Caco-2 (cell line): ENCODE measurements at regions of chr13 and their contacts with region 1.

Region 1: GRCh38 chr13:70960841-70961443 is 852.7 kb upstream of the KLHL1 start:
- DNase-seq: peak in 1 of 2 experiments; percentile 54
- H3K4me3 ChIP-seq: no peak overlapping the region
- H3K4me3 Mint-ChIP-seq: no peak overlapping the region
- H3K27ac Mint-ChIP-seq: no peak overlapping the region
- H3K4me1 ChIP-seq: no peaks in the 10 kb centered on the region
- H3K4me1 Mint-ChIP-seq: no peaks in the 10 kb centered on the region
- H3K27me3 ChIP-seq: no peaks in the 10 kb centered on the region
- H3K27me3 Mint-ChIP-seq: peaks cover under 1% of the 10 kb centered on the region
- CTCF ChIP-seq: peak; percentile 56 to 82

Region 2: DNA sequence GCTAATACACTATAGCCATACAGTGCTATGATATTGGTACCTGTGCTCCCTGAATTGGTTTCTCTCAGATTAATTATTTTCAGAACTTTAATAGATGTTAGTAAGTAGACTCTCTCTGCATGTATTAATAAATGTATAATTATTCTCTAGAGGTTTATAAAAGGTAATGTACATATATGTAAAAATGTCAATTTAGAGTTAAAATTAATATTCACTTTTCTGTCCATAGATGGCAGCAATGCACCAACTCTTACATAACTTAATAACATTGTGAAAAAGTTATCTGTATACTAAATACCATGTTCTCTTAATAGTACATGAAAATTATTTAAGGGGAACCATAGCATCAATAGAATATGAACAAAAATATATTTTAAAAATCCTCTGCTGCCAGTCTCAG is 337.7 kb before region 1 on chr13:
- CTCF ChIA-PET with region 1: no interaction called
- POLR2A ChIA-PET with region 1: no interaction called
- intact Hi-C with region 1: loop called (anchors 5 kb)
- DNase-seq: no peak
- H3K4me3 ChIP-seq: no peak overlapping the region
- H3K4me3 Mint-ChIP-seq: no peak overlapping the region
- H3K27ac Mint-ChIP-seq: no peak overlapping the region
- H3K4me1 ChIP-seq: no peaks in the 10 kb centered on the region
- H3K4me1 Mint-ChIP-seq: no peaks in the 10 kb centered on the region
- H3K27me3 ChIP-seq: no peaks in the 10 kb centered on the region
- H3K27me3 Mint-ChIP-seq: no peaks in the 10 kb centered on the region
- CTCF ChIP-seq: peak; percentile 28 to 32

Region 3: DNA sequence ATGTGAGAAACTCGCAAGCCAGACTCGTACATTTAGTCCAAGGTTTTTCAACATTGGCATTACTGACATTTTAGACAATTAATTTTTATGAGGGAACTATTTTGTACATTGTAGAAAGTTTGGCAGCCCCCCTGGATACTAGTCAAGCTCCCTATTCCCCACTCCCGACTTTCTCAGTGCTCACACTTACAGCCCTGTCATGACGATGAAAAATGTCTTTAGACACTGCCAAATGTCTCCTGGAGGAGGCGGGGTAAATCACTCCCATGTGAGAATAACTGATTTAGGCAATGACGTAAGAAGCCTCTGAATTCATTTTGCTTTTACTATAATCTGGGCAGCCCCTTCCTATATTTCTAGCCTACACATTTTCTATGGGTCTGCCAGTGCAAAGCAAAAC is 316.9 kb before region 1 on chr13:
- CTCF ChIA-PET with region 1: no interaction called
- POLR2A ChIA-PET with region 1: no interaction called
- intact Hi-C with region 1: no loop called
- DNase-seq: no peak
- H3K4me3 ChIP-seq: no peak overlapping the region
- H3K4me3 Mint-ChIP-seq: no peak overlapping the region
- H3K27ac Mint-ChIP-seq: no peak overlapping the region
- H3K4me1 ChIP-seq: no peaks in the 10 kb centered on the region
- H3K4me1 Mint-ChIP-seq: no peaks in the 10 kb centered on the region
- H3K27me3 ChIP-seq: no peaks in the 10 kb centered on the region
- H3K27me3 Mint-ChIP-seq: no peaks in the 10 kb centered on the region
- CTCF ChIP-seq: no peak

Region 4: DNA sequence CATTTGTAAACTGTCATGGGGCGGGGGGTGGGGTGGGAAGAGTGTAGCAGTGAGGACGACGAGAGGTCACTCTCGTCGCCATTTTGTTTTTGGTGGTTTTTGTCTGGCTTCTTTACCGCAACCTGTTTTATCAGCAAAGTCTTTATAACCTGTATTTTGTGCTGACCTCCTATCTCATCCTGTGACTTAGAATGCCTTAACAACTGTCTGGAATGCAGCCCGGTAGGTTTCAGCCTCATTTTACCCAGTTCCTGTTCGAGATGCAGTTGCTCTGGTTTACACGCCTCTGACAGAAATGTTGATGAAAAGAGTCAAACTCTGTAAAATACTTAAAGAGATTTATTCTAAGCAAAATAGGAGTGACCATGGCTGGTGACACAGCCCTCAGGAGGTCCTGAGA is 54.1 kb after region 1 on chr13:
- CTCF ChIA-PET with region 1: no interaction called
- POLR2A ChIA-PET with region 1: no interaction called
- intact Hi-C with region 1: loop called (anchors 1 kb)
- DNase-seq: peak; percentile 80 to 88
- H3K4me3 ChIP-seq: peak overlapping the region; percentile 46
- H3K4me3 Mint-ChIP-seq: peak overlapping the region; percentile 79
- H3K27ac Mint-ChIP-seq: peak overlapping the region; percentile 98
- H3K4me1 ChIP-seq: peaks cover 27% of the 10 kb centered on the region
- H3K4me1 Mint-ChIP-seq: peaks cover 28% of the 10 kb centered on the region
- H3K27me3 ChIP-seq: no peaks in the 10 kb centered on the region
- H3K27me3 Mint-ChIP-seq: no peaks in the 10 kb centered on the region
- CTCF ChIP-seq: no peak

Region 5: DNA sequence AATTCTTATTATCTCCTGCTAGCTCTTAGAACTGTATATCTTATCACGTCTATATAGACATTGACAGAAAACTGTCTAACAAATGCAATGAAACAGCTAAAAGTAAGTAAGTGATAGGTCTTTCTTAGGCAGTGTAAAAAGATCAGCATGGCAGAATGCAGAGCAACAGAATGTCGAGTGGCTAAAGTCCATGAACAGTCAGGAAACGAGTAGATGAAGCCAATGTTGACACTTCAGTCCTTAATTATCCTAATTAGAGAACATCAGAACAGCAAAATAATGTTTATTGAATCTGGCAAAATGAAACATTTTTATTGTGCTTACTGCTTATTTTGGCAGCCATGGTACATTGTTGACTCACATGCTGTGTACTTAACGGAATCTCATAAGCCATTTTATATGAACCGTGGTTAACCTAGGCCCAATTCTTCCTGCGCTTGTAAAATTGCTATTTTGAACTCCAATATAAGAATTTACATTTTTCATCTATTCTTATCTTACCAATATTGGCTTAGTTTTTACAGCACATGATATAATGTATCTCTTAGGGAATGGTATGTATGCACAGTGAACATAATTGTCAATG is 157.9 kb after region 1 on chr13:
- CTCF ChIA-PET with region 1: no interaction called
- POLR2A ChIA-PET with region 1: no interaction called
- intact Hi-C with region 1: loop called (anchors 5 kb)
- DNase-seq: no peak
- H3K4me3 ChIP-seq: no peak overlapping the region
- H3K4me3 Mint-ChIP-seq: no peak overlapping the region
- H3K27ac Mint-ChIP-seq: no peak overlapping the region
- H3K4me1 ChIP-seq: 0 out of 2 replicates have a peak, but pooled peaks cover 8% of the 10 kb centered on the region
- H3K4me1 Mint-ChIP-seq: peaks cover 14% of the 10 kb centered on the region
- H3K27me3 ChIP-seq: no peaks in the 10 kb centered on the region
- H3K27me3 Mint-ChIP-seq: no peaks in the 10 kb centered on the region
- CTCF ChIP-seq: no peak

Region 6: GRCh38 chr13:71218960-71219359 is 258.0 kb after region 1 on chr13:
- CTCF ChIA-PET with region 1: interaction called, 9 read pairs
- POLR2A ChIA-PET with region 1: no interaction called
- intact Hi-C with region 1: loop called (anchors 1 kb)
- DNase-seq: peak; percentile 54
- H3K4me3 ChIP-seq: no peak overlapping the region
- H3K4me3 Mint-ChIP-seq: no peak overlapping the region
- H3K27ac Mint-ChIP-seq: no peak overlapping the region
- H3K4me1 ChIP-seq: no peaks in the 10 kb centered on the region
- H3K4me1 Mint-ChIP-seq: no peaks in the 10 kb centered on the region
- H3K27me3 ChIP-seq: no peaks in the 10 kb centered on the region
- H3K27me3 Mint-ChIP-seq: no peaks in the 10 kb centered on the region
- CTCF ChIP-seq: peak; percentile 41 to 76

Region 7: DNA sequence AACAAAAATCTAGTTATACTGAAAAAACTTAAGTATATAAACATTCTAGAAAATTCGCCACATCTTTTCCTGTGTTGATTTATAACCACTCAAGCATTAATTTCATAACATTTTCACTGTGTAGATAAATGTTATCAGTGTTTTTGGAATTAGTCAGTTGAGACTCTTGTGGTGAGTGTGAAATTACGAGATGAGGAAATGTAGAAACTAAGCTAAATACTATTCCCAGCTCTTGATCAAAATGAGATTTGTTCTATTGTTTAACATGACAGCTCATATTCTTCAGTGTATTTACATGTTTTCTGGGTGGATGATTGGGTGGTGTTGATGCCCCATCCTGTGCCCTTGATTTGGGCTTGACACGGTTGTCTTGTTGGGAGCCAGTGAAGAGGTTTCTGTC is 499.3 kb after region 1 on chr13:
- CTCF ChIA-PET with region 1: no interaction called
- POLR2A ChIA-PET with region 1: no interaction called
- intact Hi-C with region 1: loop called (anchors 10 kb)
- DNase-seq: no peak
- H3K4me3 ChIP-seq: no peak overlapping the region
- H3K4me3 Mint-ChIP-seq: no peak overlapping the region
- H3K27ac Mint-ChIP-seq: no peak overlapping the region
- H3K4me1 ChIP-seq: no peaks in the 10 kb centered on the region
- H3K4me1 Mint-ChIP-seq: no peaks in the 10 kb centered on the region
- H3K27me3 ChIP-seq: no peaks in the 10 kb centered on the region
- H3K27me3 Mint-ChIP-seq: no peaks in the 10 kb centered on the region
- CTCF ChIP-seq: no peak